CD4-positive, alpha-beta memory T cell (primary cell): ENCODE measurements at regions of chr2 and their contacts with region 1.

Region 1: GRCh38 chr2:113203901-113204519 is 30.2 kb downstream of the PSD4 start:
- DNase-seq: peak; percentile 73 to 77 (median 75)
- H3K4me3 ChIP-seq: no peak overlapping the region
- H3K4me3 Mint-ChIP-seq: peak overlapping the region in 3 of 8 donors; percentile 27 to 63 (median 49)
- H3K27ac ChIP-seq: peak overlapping the region; percentile 35
- H3K27ac Mint-ChIP-seq: peak overlapping the region; percentile 80 to 91 (median 85)
- H3K4me1 ChIP-seq: peaks cover 12% of the 10 kb centered on the region
- H3K4me1 Mint-ChIP-seq: peaks cover 9 to 32% (median 20%) of the 10 kb centered on the region in 4 donors
- H3K27me3 ChIP-seq: no peaks in the 10 kb centered on the region
- H3K27me3 Mint-ChIP-seq: no peaks in the 10 kb centered on the region

Region 2: DNA sequence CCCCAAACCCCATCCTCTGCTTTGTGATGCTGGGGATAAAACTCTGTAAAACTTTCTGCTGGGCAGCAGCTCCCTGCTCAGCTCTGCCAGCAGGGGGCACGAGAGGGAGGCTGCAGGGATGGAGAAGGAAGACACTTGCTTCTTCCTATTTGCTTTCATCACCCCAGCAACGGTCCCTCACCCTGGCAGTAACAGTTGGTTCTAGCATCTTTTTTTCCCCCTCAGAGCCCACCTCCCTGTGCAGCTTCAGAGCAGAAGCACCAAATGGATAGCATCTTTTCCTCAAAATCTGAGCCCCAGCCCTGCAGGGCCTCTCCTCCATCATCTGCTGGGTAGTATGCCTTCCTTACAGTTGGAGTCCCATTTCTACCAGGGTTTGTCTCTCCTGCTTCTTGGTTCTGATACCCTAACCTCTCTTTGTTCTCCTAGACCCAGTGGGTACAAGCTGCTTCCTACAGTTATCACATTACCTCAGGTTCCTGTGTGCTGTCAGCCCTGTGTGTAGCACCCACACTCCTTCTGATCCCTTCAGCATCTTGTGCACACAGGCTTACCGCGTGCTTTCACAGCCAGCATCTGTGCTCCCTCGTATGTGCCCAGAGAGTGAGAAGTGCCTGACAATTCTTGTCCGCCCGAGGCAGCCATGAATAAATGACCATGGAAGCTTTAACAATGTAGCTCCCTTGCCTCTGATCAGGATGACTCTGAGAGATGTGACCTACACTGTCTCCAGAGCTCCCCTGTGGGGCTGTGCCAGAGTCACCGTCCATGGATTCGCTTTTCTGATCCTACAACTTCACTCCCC is 454.1 kb before region 1 on chr2:
- CTCF ChIA-PET with region 1: no interaction called
- POLR2A ChIA-PET with region 1: no interaction called
- intact Hi-C with region 1: no loop called
- DNase-seq: peak; percentile 74 to 79 (median 77)
- H3K4me3 ChIP-seq: peak overlapping the region in 1 of 2 donors; percentile 23
- H3K4me3 Mint-ChIP-seq: peak overlapping the region; percentile 53 to 84 (median 68)
- H3K27ac ChIP-seq: peak overlapping the region; percentile 22
- H3K27ac Mint-ChIP-seq: peak overlapping the region; percentile 32 to 89 (median 82)
- H3K4me1 ChIP-seq: peaks cover 9% of the 10 kb centered on the region
- H3K4me1 Mint-ChIP-seq: peaks cover 8 to 32% (median 17%) of the 10 kb centered on the region in 4 donors
- H3K27me3 ChIP-seq: no peaks in the 10 kb centered on the region
- H3K27me3 Mint-ChIP-seq: no peaks in the 10 kb centered on the region

Region 3: DNA sequence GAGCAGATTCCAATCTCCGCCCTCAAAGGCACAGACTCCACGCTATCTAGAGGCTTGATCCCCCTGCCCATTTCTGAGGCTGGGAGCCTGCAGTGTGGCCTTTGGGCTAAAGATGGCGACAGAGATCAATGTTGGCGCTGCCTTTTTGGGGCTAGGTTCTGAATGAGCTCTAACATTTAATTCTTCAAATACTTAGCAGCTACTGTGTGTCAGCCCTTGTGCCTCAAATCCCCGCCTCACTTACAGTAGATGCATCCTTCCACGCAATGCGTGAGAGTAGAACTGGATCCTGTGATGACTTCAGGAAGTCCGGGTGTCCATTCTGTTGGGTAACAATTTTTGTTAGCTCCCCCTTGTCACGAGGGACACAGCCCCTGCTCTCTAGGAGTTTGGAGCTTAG is 123.9 kb before region 1 on chr2:
- CTCF ChIA-PET with region 1: interaction called, 10 read pairs
- POLR2A ChIA-PET with region 1: no interaction called
- intact Hi-C with region 1: loop called (anchors 5 kb)
- DNase-seq: peak; percentile 15 to 44 (median 18)
- H3K4me3 ChIP-seq: no peak overlapping the region
- H3K4me3 Mint-ChIP-seq: no peak overlapping the region
- H3K27ac ChIP-seq: no peak overlapping the region
- H3K27ac Mint-ChIP-seq: no peak overlapping the region
- H3K4me1 ChIP-seq: no peaks in the 10 kb centered on the region
- H3K4me1 Mint-ChIP-seq: peaks cover 0 to 2% (median under 1%) of the 10 kb centered on the region in 4 donors
- H3K27me3 ChIP-seq: no peaks in the 10 kb centered on the region
- H3K27me3 Mint-ChIP-seq: peaks cover 4 to 13% of the 10 kb centered on the region in 2 donors

Region 4: DNA sequence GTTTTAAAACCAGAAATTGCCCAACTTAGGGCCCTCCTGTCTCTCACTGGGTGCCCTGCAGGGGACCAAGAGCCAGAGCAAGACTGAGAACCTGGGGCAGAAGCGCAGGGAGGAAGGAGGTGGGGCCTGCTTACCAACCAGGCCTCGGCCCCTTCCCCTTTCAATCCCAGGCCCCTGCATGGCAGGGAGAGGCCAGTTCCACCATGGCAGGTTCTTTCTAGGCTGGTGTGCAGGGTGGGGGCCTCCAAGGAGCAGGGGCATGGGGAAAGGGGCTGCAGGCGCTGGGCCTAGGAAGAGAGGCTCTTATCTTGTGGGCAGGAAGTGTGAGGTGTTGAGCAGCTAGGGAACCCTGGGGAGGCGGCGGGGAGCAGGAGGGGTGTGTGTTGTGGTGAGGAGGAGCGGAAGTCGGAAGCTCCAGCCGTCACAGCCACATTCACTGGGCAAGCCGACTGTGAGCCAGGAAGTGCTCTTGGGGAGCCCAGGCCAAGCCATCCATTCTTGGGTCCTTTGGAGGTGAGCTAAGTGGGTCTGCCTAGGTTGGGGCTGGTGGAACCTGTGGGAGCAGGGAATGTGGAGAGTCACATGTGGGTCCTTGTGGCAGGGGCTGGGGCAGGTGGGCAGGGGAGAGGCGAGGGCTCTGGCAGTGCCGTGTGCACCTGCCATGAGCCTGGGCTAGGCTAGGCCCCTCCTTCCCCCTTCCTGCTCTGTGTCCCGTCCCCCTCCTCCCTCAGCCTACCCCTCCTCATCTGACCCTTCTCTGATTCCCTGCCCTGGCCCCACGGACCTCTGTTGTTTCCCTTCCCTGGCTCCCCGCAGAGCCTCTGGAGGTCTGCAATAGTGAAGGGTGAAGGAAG is 30.2 kb before region 1 on chr2 and contains the start of gene PSD4:
- CTCF ChIA-PET with region 1: interaction called, 236 read pairs
- POLR2A ChIA-PET with region 1: interaction called, 88 read pairs
- intact Hi-C with region 1: loop called (anchors 1 kb)
- DNase-seq: peak; percentile 89 to 94 (median 91)
- H3K4me3 ChIP-seq: peak within 1 kb of the TSS; percentile 81 to 82
- H3K4me3 Mint-ChIP-seq: peak within 1 kb of the TSS; percentile 88 to 99 (median 94)
- H3K27ac ChIP-seq: peak within 1 kb of the TSS; percentile 85
- H3K27ac Mint-ChIP-seq: peak within 1 kb of the TSS; percentile 92 to 100 (median 96)
- H3K4me1 ChIP-seq: peaks cover 80% of the 10 kb centered on the region
- H3K4me1 Mint-ChIP-seq: peaks cover 56 to 89% (median 71%) of the 10 kb centered on the region in 4 donors
- H3K27me3 ChIP-seq: no peaks in the 10 kb centered on the region
- H3K27me3 Mint-ChIP-seq: peaks cover 2% of the 10 kb centered on the region in 2 donors
- total RNA-seq, gene PSD4: 100.0 to 101 TPM

Region 5: GRCh38 chr2:113233593-113234550 is 29.9 kb after region 1 on chr2:
- CTCF ChIA-PET with region 1: interaction called, 20 read pairs
- POLR2A ChIA-PET with region 1: interaction called, 8 read pairs
- intact Hi-C with region 1: loop called (anchors 1 kb)
- DNase-seq: no peak
- H3K4me3 ChIP-seq: no peak overlapping the region
- H3K4me3 Mint-ChIP-seq: peak overlapping the region in 1 of 8 donors; percentile 54
- H3K27ac ChIP-seq: no peak overlapping the region
- H3K27ac Mint-ChIP-seq: no peak overlapping the region
- H3K4me1 ChIP-seq: peaks cover 10% of the 10 kb centered on the region
- H3K4me1 Mint-ChIP-seq: peaks cover 3 to 33% (median 7%) of the 10 kb centered on the region in 4 donors
- H3K27me3 ChIP-seq: no peaks in the 10 kb centered on the region
- H3K27me3 Mint-ChIP-seq: no peaks in the 10 kb centered on the region

Region 6: DNA sequence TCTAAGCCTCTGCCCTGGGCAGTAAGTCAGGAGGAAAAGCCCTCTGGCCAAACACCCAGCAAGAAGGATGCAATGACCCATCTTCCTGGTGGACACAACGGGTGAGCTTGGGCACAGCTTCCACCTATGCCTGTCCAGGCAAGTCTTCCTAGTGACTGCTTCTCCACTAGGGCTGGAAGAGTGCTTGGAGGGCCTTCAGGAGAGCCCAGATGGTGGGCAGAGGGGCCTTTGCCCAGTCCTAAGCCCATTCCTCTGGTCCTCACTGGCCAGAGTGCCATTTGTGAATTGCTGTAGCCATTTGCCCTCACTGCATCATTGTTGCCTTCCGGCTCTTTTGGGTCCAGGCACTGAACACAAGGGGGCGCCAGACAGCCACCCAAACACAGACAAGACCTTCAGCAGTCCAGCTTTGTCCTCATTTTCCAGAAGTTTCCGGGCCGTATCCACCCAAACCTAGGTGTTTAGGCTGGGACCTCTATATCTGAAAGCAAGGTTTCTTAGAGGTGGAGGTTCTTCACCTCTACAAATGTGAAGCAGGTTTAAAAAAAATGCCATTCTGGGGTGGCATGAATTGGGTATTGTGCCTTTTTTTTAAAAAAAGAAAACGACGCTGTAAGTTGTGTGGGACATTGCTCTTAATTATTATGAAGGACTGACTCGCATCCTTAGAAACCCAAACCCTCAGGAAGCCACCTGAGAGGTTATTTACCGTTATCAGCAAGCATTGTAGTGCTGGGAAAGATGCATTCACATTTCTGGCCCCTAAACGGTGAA is 45.2 kb after region 1 on chr2:
- CTCF ChIA-PET with region 1: interaction called, 90 read pairs
- POLR2A ChIA-PET with region 1: interaction called, 3 read pairs
- intact Hi-C with region 1: loop called (anchors 1 kb)
- DNase-seq: peak; percentile 72 to 79 (median 74)
- H3K4me3 ChIP-seq: no peak overlapping the region
- H3K4me3 Mint-ChIP-seq: peak overlapping the region in 2 of 8 donors; percentile 43 to 45
- H3K27ac ChIP-seq: peak overlapping the region; percentile 6
- H3K27ac Mint-ChIP-seq: peak overlapping the region in 5 of 7 donors; percentile 62 to 80 (median 70)
- H3K4me1 ChIP-seq: peaks cover 53% of the 10 kb centered on the region
- H3K4me1 Mint-ChIP-seq: peaks cover 42 to 57% (median 49%) of the 10 kb centered on the region in 4 donors
- H3K27me3 ChIP-seq: no peaks in the 10 kb centered on the region
- H3K27me3 Mint-ChIP-seq: no peaks in the 10 kb centered on the region

Region 7: DNA sequence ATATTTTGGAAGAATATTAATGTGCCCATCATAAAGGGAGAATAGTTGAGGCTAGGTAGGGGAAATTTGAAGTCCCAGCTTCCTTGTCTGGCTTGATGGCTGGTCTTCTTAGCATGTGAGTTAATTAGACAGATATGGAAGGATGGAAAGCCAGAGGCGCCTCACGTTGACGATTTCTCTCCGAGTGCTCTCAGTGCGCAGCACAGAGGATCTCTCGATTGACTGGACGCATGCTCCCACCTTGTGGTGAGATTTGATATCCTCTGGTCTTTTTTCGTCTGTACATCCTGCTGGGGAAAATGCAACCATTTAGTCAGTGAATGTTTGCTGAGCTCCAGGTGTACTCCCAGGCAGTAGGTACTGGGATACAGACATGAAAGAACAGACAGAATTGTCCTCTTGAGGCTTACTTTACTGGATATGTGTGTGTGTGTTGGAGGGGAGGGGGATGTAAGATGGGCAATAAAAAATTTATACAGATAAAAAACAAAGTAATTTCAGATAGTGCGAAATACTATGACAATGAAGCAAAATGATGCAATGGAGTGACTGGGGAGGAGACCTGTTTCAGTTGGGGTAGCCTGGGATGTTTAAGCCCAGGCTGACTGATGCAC is 166.6 kb after region 1 on chr2:
- CTCF ChIA-PET with region 1: interaction called, 46 read pairs
- POLR2A ChIA-PET with region 1: interaction called, 4 read pairs
- intact Hi-C with region 1: loop called (anchors 1 kb)
- DNase-seq: peak; percentile 61 to 70 (median 66)
- H3K4me3 ChIP-seq: no peak overlapping the region
- H3K4me3 Mint-ChIP-seq: no peak overlapping the region
- H3K27ac ChIP-seq: no peak overlapping the region
- H3K27ac Mint-ChIP-seq: peak overlapping the region in 2 of 7 donors; percentile 4 to 76
- H3K4me1 ChIP-seq: no peaks in the 10 kb centered on the region
- H3K4me1 Mint-ChIP-seq: peaks cover 0 to 5% (median 1%) of the 10 kb centered on the region in 4 donors
- H3K27me3 ChIP-seq: no peaks in the 10 kb centered on the region
- H3K27me3 Mint-ChIP-seq: peaks cover 4 to 5% of the 10 kb centered on the region in 2 donors